Activated B cell treated with CpG ODN at 0.5 μM for 24 hours (primary cell): ENCODE measurements at regions of chr19 and their contacts with region 1.

Region 1: GRCh38 chr19:45405435-45406225 is 761 bp upstream of the PPP1R13L start:
- DNase-seq: peak; percentile 76
- ATAC-seq: peak; percentile 65
- H3K4me3 Mint-ChIP-seq: peak overlapping the region; percentile 96
- H3K27ac Mint-ChIP-seq: peak overlapping the region; percentile 95
- H3K4me1 Mint-ChIP-seq: peaks cover 43% of the 10 kb centered on the region
- H3K27me3 Mint-ChIP-seq: peaks cover 12% of the 10 kb centered on the region
- CTCF ChIP-seq: no peak

Region 2: DNA sequence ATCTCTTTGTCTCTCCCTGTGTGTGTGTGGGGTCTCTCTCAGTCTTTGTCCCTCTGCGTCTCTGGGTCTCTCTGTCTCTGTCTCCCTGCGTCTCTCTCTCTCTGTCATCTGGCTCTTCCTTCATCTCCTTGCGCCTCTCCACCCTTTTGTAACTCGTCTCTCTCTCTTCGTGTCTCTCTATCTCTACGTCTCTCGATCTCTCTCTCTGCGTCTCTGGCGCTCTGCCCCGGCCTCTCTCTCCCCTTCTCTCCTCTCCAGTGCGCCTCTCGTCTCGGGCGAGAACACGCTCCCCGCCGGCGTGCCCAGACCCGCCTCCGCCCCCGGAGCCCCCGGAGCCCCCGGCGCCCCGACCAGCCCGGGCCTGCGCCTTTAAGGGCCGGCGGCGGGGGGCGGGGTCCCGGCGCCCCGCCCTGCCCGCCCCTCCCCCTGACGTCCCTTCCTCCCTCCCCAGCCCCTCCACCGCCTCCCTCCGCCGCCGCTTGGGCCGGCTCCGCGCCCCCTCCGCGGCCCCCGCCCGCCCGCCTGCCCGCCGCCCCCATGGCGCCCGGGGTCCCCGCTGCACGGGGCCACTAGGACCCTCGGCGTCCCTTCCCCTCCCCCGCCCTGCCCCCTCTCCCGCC is 154.7 kb before region 1 on chr19 and contains the start of gene MARK4:
- CTCF ChIA-PET with region 1: no interaction called
- POLR2A ChIA-PET with region 1: no interaction called
- intact Hi-C with region 1: loop called (anchors 10 kb)
- DNase-seq: peak; percentile 56
- ATAC-seq: peak; percentile 79
- H3K4me3 Mint-ChIP-seq: peak within 1 kb of the TSS; percentile 86
- H3K27ac Mint-ChIP-seq: peak within 1 kb of the TSS; percentile 50
- H3K4me1 Mint-ChIP-seq: peaks cover 39% of the 10 kb centered on the region
- H3K27me3 Mint-ChIP-seq: no peaks in the 10 kb centered on the region
- CTCF ChIP-seq: no peak
- total RNA-seq, gene MARK4: 26.0 and 28.0 TPM in 2 replicates

Region 3: DNA sequence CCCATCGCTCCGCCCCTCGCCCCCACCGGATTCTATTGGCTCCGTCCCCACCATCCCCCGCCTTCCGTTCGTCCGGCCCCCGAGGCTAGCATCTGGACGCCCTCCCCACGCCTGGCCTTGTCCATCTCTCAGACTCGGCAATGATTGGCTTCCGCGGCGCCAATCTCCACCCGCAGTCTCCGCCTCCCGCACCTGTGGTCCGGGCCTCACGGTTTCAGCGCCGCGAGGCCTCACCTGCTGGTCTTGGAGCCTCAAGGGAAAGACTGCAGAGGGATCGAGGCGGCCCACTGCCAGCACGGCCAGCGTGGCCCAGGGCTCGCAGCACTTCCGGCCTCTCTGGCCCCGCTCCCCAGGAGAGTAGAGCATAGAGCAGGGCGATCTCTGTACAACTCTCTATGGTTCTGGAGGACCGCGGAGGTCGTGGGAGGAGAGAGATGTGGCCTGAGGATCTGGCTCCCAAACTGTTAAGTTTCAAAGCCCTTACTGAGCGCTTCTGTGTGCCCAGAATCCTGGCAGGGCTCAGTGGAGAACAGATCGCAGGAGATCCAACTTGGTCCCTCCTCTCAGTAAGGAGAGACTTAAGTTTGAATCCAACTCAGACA is 18.1 kb after region 1 on chr19 and contains the start of gene ERCC1:
- CTCF ChIA-PET with region 1: interaction called, 5 read pairs
- POLR2A ChIA-PET with region 1: interaction called, 5 read pairs
- intact Hi-C with region 1: loop called (anchors 1 kb)
- DNase-seq: peak; percentile 79
- ATAC-seq: peak; percentile 74
- H3K4me3 Mint-ChIP-seq: peak within 1 kb of the TSS; percentile 96
- H3K27ac Mint-ChIP-seq: peak within 1 kb of the TSS; percentile 89
- H3K4me1 Mint-ChIP-seq: peaks cover 65% of the 10 kb centered on the region
- H3K27me3 Mint-ChIP-seq: no peaks in the 10 kb centered on the region
- CTCF ChIP-seq: no peak
- total RNA-seq, gene ERCC1: 69.2 and 71.6 TPM in 2 replicates

Region 4: GRCh38 chr19:45450012-45450333 is 44.3 kb after region 1 on chr19:
- CTCF ChIA-PET with region 1: no interaction called
- POLR2A ChIA-PET with region 1: no interaction called
- intact Hi-C with region 1: loop called (anchors 1 kb)
- DNase-seq: no peak
- ATAC-seq: peak; percentile 11
- H3K4me3 Mint-ChIP-seq: peak overlapping the region; percentile 92
- H3K27ac Mint-ChIP-seq: peak overlapping the region; percentile 97
- H3K4me1 Mint-ChIP-seq: peaks cover 52% of the 10 kb centered on the region
- H3K27me3 Mint-ChIP-seq: no peaks in the 10 kb centered on the region
- CTCF ChIP-seq: no peak

Region 5: GRCh38 chr19:45485305-45486077 is 79.9 kb after region 1 on chr19:
- CTCF ChIA-PET with region 1: interaction called, 12 read pairs
- POLR2A ChIA-PET with region 1: interaction called, 3 read pairs
- intact Hi-C with region 1: loop called (anchors 1 kb)
- DNase-seq: peak; percentile 96
- ATAC-seq: peak; percentile 99
- H3K4me3 Mint-ChIP-seq: peak overlapping the region; percentile 91
- H3K27ac Mint-ChIP-seq: peak overlapping the region; percentile 74
- H3K4me1 Mint-ChIP-seq: peaks cover 8% of the 10 kb centered on the region
- H3K27me3 Mint-ChIP-seq: peaks cover 3% of the 10 kb centered on the region
- CTCF ChIP-seq: peak; percentile 84

Region 6: GRCh38 chr19:45547976-45548609 is 142.5 kb after region 1 on chr19:
- CTCF ChIA-PET with region 1: no interaction called
- POLR2A ChIA-PET with region 1: no interaction called
- intact Hi-C with region 1: no loop called
- DNase-seq: no peak
- ATAC-seq: no peak
- H3K4me3 Mint-ChIP-seq: no peak overlapping the region
- H3K27ac Mint-ChIP-seq: no peak overlapping the region
- H3K4me1 Mint-ChIP-seq: peaks cover 24% of the 10 kb centered on the region
- H3K27me3 Mint-ChIP-seq: no peaks in the 10 kb centered on the region
- CTCF ChIP-seq: no peak

Region 7: DNA sequence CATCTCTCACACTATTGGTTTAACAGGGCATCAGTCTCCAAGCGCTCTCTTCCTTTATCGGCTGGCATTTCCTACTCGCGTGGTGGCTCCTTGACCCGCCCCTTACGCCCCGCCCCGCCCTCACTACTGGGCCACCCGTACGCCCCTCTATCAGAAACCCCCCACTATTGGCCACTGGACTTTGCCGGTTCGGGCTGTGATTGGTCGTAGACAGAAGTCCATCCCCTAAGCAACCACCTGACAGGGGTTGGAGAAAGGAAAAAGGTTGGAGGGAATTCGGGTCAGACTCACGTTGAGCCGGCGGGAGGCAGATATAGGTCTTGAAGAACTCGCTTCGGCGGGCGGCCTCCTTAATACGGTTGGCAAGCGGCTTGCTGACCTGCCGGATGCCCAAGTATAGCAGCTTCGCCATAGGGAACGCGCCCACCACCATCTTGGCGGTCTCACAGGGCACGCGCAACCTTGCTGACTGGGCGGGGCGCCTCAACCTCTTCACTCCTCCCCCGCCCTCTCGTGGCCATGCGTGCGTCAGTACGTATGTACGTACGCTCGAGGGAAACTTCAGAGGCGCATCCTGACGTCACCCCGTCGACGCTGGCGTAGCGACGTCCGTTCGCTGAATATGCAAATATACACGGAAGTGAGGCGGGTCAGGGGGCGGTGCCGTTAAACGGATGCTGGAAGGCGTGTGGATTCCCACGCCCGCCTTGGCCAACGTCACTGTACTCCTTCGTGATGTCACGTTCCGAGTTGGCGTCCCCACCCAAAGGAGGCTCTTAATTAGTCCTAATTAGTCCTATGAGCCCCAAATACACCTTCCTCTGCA is 178.9 kb after region 1 on chr19 and contains the start of gene OPA3:
- CTCF ChIA-PET with region 1: no interaction called
- POLR2A ChIA-PET with region 1: interaction called, 3 read pairs
- intact Hi-C with region 1: loop called (anchors 1 kb)
- DNase-seq: peak; percentile 94
- ATAC-seq: peak; percentile 89
- H3K4me3 Mint-ChIP-seq: peak within 1 kb of the TSS; percentile 96
- H3K27ac Mint-ChIP-seq: peak within 1 kb of the TSS; percentile 98
- H3K4me1 Mint-ChIP-seq: peaks cover 13% of the 10 kb centered on the region
- H3K27me3 Mint-ChIP-seq: peaks cover 5% of the 10 kb centered on the region
- CTCF ChIP-seq: no peak
- total RNA-seq, gene OPA3: 12.0 and 14.4 TPM in 2 replicates